Activated CD4-positive, alpha-beta T cell treated with anti-CD3 and anti-CD28 coated beads, Interleukin-2, amount 10 ng/mL, durations not matched to agents 24 days and 14 days (primary cell): ENCODE measurements at regions of chr14 and their contacts with region 1.

Region 1: DNA sequence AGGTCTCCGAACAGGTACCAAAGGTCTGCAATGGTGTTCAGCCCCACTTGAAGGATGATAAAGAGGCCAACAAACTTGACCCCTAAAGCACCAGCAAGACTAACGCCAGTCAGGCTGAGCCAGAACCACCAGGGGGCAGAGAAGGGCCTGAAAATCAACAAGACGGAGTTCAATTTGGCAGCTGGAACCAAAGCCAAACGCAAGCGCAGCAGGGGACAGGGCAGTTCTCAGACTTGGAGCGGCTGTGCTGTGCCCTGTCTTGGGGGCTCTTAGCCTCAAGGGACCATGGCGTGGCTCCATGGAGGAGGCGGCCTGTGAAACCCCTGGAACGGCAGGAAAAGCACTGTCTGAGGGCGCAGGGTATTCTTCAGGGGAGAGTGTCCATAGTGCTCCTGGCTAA is 19.6 kb downstream of the POMT2 start:
- DNase-seq: peak; percentile 88
- H3K4me3 Mint-ChIP-seq: no peak overlapping the region
- H3K27ac Mint-ChIP-seq: no peak overlapping the region
- H3K4me1 Mint-ChIP-seq: peaks cover 22% of the 10 kb centered on the region
- H3K27me3 Mint-ChIP-seq: no peaks in the 10 kb centered on the region

Region 2: DNA sequence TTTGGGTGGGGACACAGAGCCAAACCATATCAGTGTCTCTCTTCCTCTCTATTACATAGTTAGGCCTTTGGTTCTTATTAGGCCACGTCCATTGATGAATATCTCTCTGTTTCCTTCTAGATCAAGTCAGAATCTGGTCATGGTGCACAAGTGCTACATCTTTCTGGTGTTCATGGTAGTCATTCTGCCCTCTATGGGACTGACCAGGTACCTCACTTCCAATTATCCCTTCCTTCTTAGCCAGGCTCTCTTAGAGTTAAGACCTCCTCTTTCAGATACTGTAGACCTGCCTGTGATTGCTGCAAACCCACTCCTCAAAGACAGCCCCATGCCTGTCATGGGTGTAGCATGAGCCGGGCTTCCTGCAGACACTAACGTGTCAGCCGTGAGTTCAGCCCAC is 55.3 kb before region 1 on chr14:
- intact Hi-C with region 1: no loop called
- DNase-seq: no peak
- H3K4me3 Mint-ChIP-seq: no peak overlapping the region
- H3K27ac Mint-ChIP-seq: no peak overlapping the region
- H3K4me1 Mint-ChIP-seq: no peaks in the 10 kb centered on the region
- H3K27me3 Mint-ChIP-seq: no peaks in the 10 kb centered on the region

Region 3: GRCh38 chr14:77376771-77377501 is 75.8 kb after region 1 on chr14 and contains the starts of genes SAMD15 and TMED8:
- intact Hi-C with region 1: loop called (anchors 1 kb)
- DNase-seq: peak; percentile 95
- H3K4me3 Mint-ChIP-seq: peak within 1 kb of the TSS; percentile 93
- H3K27ac Mint-ChIP-seq: peak within 1 kb of the TSS; percentile 92
- H3K4me1 Mint-ChIP-seq: peaks cover 29% of the 10 kb centered on the region
- H3K27me3 Mint-ChIP-seq: peaks cover 16% of the 10 kb centered on the region
- total RNA-seq, gene SAMD15: 0.28 and 0.63 TPM in 2 replicates
- total RNA-seq, gene TMED8: 31.1 and 32.1 TPM in 2 replicates